ENCODE measurements at regions of chr7 and their contacts with region 1.

Region 1: DNA sequence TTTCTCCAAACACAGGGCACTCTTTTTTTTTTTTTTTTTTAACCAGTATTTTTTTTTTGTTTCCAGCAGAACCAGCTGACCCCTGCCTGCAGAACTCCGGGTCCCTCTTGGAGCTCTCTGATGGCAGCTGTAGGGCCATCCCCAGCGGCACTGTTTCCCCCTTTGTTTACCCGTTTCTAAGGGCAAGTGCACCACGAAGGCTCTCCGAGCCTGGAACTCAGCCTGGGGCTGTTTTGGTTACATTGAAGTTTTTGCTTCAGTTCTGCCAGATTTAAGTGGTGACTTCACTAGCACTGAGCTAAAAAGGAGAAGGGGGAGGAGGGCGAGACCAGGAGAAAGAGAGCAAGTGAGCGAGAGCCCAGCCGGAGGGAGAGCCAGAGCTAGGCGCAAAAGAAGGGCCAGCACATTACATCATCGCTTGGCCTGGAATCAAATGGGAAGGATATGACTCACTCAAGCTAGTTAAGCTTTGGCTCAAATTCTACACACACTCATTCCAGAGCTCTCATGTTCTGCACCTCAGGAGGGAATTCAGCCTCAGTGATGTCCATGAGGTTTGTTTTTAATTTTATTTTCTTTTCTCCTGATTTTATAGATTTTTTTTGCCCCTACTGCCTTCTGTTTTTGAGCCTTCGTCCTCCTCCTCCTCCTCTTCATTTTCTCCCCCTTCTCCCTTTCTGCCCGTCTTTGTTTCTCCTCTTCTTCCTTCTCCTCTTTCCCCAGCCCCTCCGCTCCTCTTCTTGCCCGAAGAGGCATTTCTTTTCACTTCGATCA is 272.3 kb downstream of the TRIL start:
- DNase-seq: peak; percentile 95 to 99
- H3K4me3 ChIP-seq: peak overlapping the region; percentile 37 to 38
- H3K27ac ChIP-seq: peak overlapping the region; percentile 91
- H3K4me1 ChIP-seq: no peaks in the 10 kb centered on the region
- H3K27me3 ChIP-seq: no peaks in the 10 kb centered on the region
- CTCF ChIP-seq: peak in 1 of 4 experiments; percentile 15
- POLR2A ChIP-seq: peak; percentile 63 to 73

Region 2: GRCh38 chr7:28395831-28396230 is 290.0 kb before region 1 on chr7:
- intact Hi-C with region 1: loop called (anchors 5 kb)
- DNase-seq: no peak
- H3K4me3 ChIP-seq: no peak overlapping the region
- H3K27ac ChIP-seq: no peak overlapping the region
- H3K4me1 ChIP-seq: no peaks in the 10 kb centered on the region
- H3K27me3 ChIP-seq: no peaks in the 10 kb centered on the region
- CTCF ChIP-seq: no peak
- POLR2A ChIP-seq: no peak